ENCODE measurements at regions of chr9 and their contacts with region 1.

Region 1: DNA sequence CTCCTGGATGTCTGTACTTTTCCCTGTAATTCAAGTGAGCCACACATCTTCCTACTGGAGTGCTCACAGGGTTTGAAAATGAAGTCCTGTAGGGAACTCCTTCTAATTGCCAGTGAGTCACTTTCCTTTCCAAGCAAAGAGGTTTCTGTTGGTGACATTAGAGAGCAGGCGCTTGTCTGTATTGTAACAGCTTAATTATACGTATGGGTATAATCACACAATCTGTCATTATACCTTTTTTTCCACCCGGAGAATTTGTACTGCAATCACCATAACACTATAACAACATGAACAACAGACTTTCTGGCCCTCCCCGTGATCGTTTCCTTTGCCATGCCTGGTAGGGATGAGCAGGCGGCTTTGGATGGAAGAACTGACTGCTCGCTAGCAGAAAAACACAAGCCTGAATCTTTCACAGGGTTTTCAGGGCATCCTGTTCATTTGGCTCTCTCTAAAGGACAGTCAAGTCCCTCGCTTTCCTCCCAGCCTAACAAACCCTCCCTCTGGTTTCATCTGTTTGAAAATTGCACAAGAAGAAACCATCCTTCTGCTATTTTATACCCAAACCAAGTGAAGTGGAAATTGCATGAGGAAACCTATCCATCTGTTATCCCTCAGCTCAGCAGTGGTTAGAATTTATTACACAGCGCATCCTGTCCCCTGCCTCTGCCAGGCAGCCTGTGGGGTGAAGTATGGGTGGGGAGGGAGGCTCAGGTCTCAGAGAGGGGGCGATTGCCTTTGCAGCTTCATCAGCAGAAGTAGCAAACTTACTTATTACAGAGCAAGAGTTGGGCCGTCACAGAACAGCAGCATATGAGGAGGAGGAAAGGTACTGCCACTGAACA is 307.0 kb upstream of the TLE4 start:
- DNase-seq: no peak
- H3K4me3 ChIP-seq: no peak overlapping the region
- H3K27ac ChIP-seq: no peak overlapping the region
- H3K4me1 ChIP-seq: no peaks in the 10 kb centered on the region
- H3K27me3 ChIP-seq: no peaks in the 10 kb centered on the region
- CTCF ChIP-seq: no peak
- EP300 ChIP-seq: no peak
- POLR2A ChIP-seq: no peak

Region 2: GRCh38 chr9:79140773-79141172 is 124.0 kb before region 1 on chr9:
- intact Hi-C with region 1: loop called in 1 of 4 experiments (anchors 10 kb)
- DNase-seq: no peak
- H3K4me3 ChIP-seq: no peak overlapping the region
- H3K27ac ChIP-seq: no peak overlapping the region
- H3K4me1 ChIP-seq: no peaks in the 10 kb centered on the region
- H3K27me3 ChIP-seq: no peaks in the 10 kb centered on the region
- CTCF ChIP-seq: no peak
- EP300 ChIP-seq: no peak
- POLR2A ChIP-seq: no peak

Region 3: DNA sequence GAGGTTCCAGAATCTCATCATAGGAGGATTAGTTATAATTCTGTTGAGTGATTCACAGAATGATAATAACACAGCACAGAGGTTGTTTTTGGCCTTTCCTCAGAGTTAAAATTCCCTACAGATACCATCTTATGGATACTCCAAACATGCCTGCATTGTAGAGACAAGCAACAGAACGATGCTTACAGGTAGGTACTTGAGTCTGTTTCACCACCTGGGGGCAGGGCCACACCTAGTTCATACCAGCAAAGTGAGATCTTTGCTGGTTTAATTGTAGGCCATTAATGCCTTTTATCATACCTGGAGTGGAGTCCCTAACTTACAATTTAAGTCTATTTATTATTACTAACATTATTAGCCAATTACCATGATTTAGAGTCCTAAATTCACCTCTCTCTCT is 109.4 kb before region 1 on chr9:
- intact Hi-C with region 1: no loop called
- DNase-seq: no peak
- H3K4me3 ChIP-seq: no peak overlapping the region
- H3K27ac ChIP-seq: no peak overlapping the region
- H3K4me1 ChIP-seq: no peaks in the 10 kb centered on the region
- H3K27me3 ChIP-seq: no peaks in the 10 kb centered on the region
- CTCF ChIP-seq: no peak
- EP300 ChIP-seq: no peak
- POLR2A ChIP-seq: no peak

Region 4: DNA sequence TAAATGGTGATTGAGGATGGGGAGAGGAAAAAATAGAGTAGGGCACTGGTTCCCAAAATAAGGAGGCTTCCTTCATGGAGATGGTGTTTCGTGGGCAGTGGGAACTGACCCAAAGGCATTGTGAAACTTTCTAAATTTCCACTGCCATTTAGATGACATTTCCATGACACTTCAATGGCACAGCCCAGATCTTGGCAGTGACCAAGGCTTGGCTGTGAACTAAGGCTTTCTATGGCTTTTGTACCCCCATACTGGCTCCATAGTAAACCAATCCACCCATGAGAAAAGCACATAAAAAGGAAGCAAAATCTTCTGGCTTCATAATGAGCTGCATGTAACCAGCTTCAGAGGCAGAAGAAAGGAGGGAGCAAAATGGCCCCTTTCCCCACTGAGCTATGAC is 13.9 kb before region 1 on chr9:
- intact Hi-C with region 1: loop called in 1 of 4 experiments (anchors 2 kb)
- DNase-seq: no peak
- H3K4me3 ChIP-seq: no peak overlapping the region
- H3K27ac ChIP-seq: no peak overlapping the region
- H3K4me1 ChIP-seq: no peaks in the 10 kb centered on the region
- H3K27me3 ChIP-seq: no peaks in the 10 kb centered on the region
- CTCF ChIP-seq: no peak
- EP300 ChIP-seq: no peak
- POLR2A ChIP-seq: no peak